ENCODE measurements at regions of chr1 and their contacts with region 1.

Region 1: GRCh38 chr1:84442256-84442655 is 36.8 kb upstream of the RPF1 start:
- DNase-seq: peak; percentile 13
- H3K4me3 Mint-ChIP-seq: no peak overlapping the region
- H3K27ac Mint-ChIP-seq: peak overlapping the region; percentile 73
- H3K4me1 Mint-ChIP-seq: peaks cover 23% of the 10 kb centered on the region
- H3K27me3 Mint-ChIP-seq: peaks cover 8% of the 10 kb centered on the region

Region 2: GRCh38 chr1:84478876-84479868 is 36.9 kb after region 1 on chr1 and contains the start of gene RPF1:
- intact Hi-C with region 1: loop called (anchors 1 kb)
- DNase-seq: peak; percentile 70
- H3K4me3 Mint-ChIP-seq: peak within 1 kb of the TSS; percentile 98
- H3K27ac Mint-ChIP-seq: peak within 1 kb of the TSS; percentile 97
- H3K4me1 Mint-ChIP-seq: peaks cover 34% of the 10 kb centered on the region
- H3K27me3 Mint-ChIP-seq: peaks cover 28% of the 10 kb centered on the region
- total RNA-seq, gene RPF1: 65.2 and 65.5 TPM in 2 replicates

Region 3: GRCh38 chr1:84541679-84542078 is 99.4 kb after region 1 on chr1:
- intact Hi-C with region 1: loop called (anchors 1 kb)
- DNase-seq: no peak
- H3K4me3 Mint-ChIP-seq: no peak overlapping the region
- H3K27ac Mint-ChIP-seq: no peak overlapping the region
- H3K4me1 Mint-ChIP-seq: peaks cover 35% of the 10 kb centered on the region
- H3K27me3 Mint-ChIP-seq: no peaks in the 10 kb centered on the region

Region 4: DNA sequence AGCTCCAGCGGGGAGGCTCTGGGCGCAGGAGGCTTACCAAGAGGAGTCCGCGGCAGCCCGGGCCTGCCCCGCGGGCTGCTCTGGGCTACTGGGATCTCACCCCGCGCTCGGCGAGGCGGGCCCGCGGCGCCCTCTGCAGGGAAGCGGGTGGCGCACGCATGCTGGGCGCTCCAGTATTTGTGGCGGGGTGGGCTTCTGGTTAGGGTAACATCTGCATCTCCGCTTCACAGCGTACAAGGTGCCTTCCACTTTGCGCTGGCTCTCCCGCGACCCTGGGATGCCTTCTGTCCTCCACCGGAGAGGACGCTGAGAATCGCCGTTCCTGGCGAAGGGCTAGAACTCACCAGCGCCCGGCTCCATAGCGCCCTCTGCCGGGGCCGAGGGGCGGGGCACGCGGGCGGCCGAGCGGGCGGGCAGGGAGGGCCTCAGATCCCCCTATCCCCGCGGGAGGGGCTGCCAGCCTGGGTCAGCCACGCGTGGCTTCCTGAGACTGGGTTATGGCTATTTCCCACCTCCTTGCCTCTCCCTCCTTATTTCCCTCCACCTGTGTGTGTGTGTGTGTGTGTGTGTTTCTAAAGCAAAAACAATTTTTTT is 178.6 kb after region 1 on chr1:
- intact Hi-C with region 1: loop called (anchors 1 kb)
- DNase-seq: peak; percentile 79
- H3K4me3 Mint-ChIP-seq: peak overlapping the region; percentile 88
- H3K27ac Mint-ChIP-seq: peak overlapping the region; percentile 80
- H3K4me1 Mint-ChIP-seq: peaks cover 23% of the 10 kb centered on the region
- H3K27me3 Mint-ChIP-seq: no peaks in the 10 kb centered on the region

Region 5: DNA sequence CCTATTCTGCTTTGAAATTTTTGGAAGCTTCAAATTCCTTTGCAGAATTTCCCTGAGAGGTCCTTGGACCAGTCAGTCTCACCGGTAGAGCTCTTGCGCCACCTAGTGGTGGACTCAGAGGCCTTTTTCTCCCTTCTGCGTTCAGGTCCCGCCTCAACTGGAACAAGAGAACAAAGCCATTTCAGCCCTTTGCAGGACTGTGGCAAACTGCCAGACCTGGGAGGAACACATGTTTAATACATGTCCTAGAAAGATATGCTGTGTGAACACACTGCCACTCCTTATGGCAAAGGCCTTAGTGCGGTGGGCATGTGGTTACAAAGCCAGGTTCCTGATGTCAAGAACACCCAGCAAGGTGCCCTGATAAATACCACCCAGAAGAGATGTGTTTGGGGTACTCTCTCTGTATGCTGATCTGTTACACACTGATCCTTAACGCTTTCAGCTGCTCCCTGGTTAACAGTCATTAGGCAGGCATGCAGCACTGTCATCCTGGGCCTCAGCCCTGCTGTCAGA is 330.2 kb after region 1 on chr1:
- intact Hi-C with region 1: loop called (anchors 1 kb)
- DNase-seq: peak; percentile 48
- H3K4me3 Mint-ChIP-seq: no peak overlapping the region
- H3K27ac Mint-ChIP-seq: no peak overlapping the region
- H3K4me1 Mint-ChIP-seq: peaks cover 6% of the 10 kb centered on the region
- H3K27me3 Mint-ChIP-seq: peaks cover 21% of the 10 kb centered on the region

Region 6: GRCh38 chr1:84862810-84863251 is 420.6 kb after region 1 on chr1:
- intact Hi-C with region 1: loop called (anchors 2 kb)
- DNase-seq: peak; percentile 66
- H3K4me3 Mint-ChIP-seq: peak overlapping the region; percentile 77
- H3K27ac Mint-ChIP-seq: peak overlapping the region; percentile 82
- H3K4me1 Mint-ChIP-seq: peaks cover 53% of the 10 kb centered on the region
- H3K27me3 Mint-ChIP-seq: peaks cover 1% of the 10 kb centered on the region

Region 7: DNA sequence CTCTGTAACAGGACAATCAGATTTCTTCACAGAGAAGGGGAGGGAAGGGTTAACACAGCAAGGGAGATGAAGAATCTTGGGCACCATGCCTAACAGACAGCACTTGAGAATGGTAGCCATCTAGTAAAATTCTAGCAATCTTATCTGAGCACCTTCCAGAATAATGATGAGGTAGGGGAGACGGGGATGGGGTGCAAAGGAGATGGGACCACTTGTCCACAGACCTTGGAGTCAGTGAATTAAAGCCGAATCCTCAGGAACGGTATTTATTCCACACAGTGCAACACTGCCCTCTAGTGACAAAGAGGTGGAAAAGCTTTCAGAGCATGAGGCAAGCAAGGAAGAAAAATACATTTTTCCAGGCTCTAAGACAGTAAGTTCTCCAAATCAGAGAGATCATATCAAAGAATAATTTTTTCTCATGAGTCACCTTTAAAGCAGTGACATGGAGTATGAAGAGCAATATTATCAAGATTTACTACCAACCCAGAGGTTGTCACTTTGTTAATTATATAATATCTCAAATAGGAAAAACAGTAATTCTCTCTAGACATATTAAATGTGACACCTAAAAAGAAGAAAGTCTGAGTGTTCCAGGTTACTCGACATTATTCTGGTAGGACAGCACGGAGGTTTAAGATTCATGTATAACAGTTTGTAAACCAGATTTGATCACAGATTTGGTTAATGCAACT is 494.0 kb after region 1 on chr1:
- intact Hi-C with region 1: loop called (anchors 2 kb)
- DNase-seq: peak; percentile 26
- H3K4me3 Mint-ChIP-seq: no peak overlapping the region
- H3K27ac Mint-ChIP-seq: no peak overlapping the region
- H3K4me1 Mint-ChIP-seq: peaks cover 7% of the 10 kb centered on the region
- H3K27me3 Mint-ChIP-seq: no peaks in the 10 kb centered on the region

Measured in activated T-helper 1 cell treated with anti-CD3 and anti-CD28 coated beads, Interleukin-12 subunit alpha, Interleukin-12 subunit beta, Interleukin-2, Interleukin-4 antibody, amounts not matched to agents 30 ng/mL and 10 ng/mL and 1 ng/mL, durations not matched to agents 14 hours and 24 hours and 36 hours (primary cell).